ENCODE measurements at regions of chr10 and their contacts with region 1.

Region 1: GRCh38 chr10:30583778-30584415 is 45.7 kb downstream of the LYZL2 start:
- DNase-seq: peak; percentile 96
- H3K4me3 ChIP-seq: peak overlapping the region; percentile 27 to 60 (median 39)
- H3K27ac ChIP-seq: peak overlapping the region; percentile 55
- H3K4me1 ChIP-seq: peaks cover 15% of the 10 kb centered on the region
- H3K27me3 ChIP-seq: peaks cover 0 to 2% of the 10 kb centered on the region in 2 experiments
- CTCF ChIP-seq: no peak
- POLR2A ChIP-seq: no peak

Region 2: DNA sequence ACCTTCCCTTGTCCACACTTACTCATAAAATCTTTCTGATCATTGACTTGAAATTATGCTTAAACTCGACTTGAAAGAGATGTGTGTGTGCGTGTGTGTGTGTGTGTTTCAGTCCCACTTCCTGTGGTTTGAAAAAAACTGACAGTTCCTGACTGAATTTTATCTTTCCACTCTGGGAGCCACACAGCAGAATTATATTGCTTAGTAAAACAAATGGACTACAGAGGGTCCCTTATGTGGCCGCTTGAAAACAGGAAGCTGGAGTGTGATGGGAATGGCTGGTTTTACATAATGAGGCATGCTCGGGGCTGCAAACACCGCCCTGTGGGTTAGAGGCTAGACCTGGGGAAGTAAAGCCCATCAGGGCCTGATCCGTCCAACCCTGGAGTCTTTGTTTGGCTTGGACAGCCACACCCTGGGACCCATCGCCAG is 1240.3 kb before region 1 on chr10:
- CTCF ChIA-PET with region 1: no interaction called
- POLR2A ChIA-PET with region 1: no interaction called
- dilution Hi-C with region 1: no loop called
- intact Hi-C with region 1: no loop called
- DNase-seq: no peak
- H3K4me3 ChIP-seq: no peak overlapping the region
- H3K27ac ChIP-seq: no peak overlapping the region
- H3K4me1 ChIP-seq: peaks cover 2% of the 10 kb centered on the region
- H3K27me3 ChIP-seq: peaks cover 11 to 15% of the 10 kb centered on the region in 2 experiments
- CTCF ChIP-seq: no peak
- POLR2A ChIP-seq: no peak

Region 3: GRCh38 chr10:30562787-30563186 is 21.1 kb before region 1 on chr10:
- CTCF ChIA-PET with region 1: interaction called, 12 read pairs
- POLR2A ChIA-PET with region 1: interaction called, 4 read pairs
- dilution Hi-C with region 1: no loop called
- intact Hi-C with region 1: no loop called
- DNase-seq: no peak
- H3K4me3 ChIP-seq: no peak overlapping the region
- H3K27ac ChIP-seq: no peak overlapping the region
- H3K4me1 ChIP-seq: no peaks in the 10 kb centered on the region
- H3K27me3 ChIP-seq: peaks cover 3 to 8% of the 10 kb centered on the region in 2 experiments
- CTCF ChIP-seq: no peak
- POLR2A ChIP-seq: no peak

Measured in endothelial cell of umbilical vein (primary cell).